Heart right ventricle (tissue), 16 donors: ENCODE measurements at regions of chr16 and their contacts with region 1.

Region 1: DNA sequence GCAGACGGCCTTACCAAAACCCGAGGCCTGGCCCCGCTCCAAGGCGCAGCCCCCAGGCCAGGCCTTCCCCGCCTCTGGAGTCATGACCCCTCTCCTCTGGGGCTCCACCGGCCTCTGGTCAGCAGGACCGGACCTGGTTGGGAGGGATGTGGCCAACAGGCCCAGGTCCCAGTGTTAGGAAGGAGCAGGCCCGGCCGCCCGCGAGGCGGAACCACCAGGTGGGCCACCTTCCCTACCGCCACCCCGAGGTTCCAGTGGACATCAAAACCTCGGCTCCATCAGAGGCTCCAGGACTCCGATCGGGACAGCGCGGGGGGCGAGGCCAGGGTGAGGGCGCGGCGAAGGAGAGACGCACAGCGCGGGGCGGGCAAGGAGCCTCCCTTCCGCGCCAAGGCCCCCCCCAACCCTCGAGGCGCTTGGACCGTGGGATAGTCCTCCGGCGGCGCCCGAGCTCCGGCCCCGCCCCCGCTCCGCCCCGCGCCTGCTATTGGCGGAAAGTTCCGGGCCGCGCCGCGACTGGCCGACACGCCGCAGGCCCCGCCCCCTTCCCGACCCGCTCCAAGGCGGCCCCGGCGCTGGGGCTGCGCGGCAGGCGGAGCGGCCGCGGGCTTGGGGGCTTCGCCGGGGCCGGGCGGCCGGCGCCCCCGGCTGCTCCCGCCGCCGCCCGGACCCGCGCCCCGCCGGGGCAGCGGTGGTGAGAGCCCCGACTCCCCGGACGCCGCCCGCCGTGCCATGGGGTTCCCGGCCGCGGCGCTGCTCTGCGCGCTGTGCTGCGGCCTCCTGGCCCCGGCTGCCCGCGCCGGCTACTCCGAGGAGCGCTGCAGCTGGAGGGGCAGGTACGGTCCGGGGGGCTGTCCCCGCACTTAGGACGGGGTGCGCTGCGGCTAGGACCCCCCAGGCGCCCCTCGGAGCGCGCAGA is at the start of gene METRN:
- DNase-seq: peak; percentile 92 to 95
- ATAC-seq: peak; percentile 78 to 94 (median 89)
- H3K4me3 ChIP-seq: peak within 1 kb of the TSS; percentile 64 to 94 (median 73)
- H3K27ac ChIP-seq: peak within 1 kb of the TSS in 8 of 10 donors; percentile 21 to 58 (median 50)
- H3K4me1 ChIP-seq: peaks cover 18 to 49% (median 34%) of the 10 kb centered on the region in 9 donors
- H3K27me3 ChIP-seq: peaks cover 0 to 46% (median 19%) of the 10 kb centered on the region in 7 donors
- CTCF ChIP-seq: no peak
- total RNA-seq, gene METRN: 51.4 to 77.2 (median 60.5) TPM

Region 2: DNA sequence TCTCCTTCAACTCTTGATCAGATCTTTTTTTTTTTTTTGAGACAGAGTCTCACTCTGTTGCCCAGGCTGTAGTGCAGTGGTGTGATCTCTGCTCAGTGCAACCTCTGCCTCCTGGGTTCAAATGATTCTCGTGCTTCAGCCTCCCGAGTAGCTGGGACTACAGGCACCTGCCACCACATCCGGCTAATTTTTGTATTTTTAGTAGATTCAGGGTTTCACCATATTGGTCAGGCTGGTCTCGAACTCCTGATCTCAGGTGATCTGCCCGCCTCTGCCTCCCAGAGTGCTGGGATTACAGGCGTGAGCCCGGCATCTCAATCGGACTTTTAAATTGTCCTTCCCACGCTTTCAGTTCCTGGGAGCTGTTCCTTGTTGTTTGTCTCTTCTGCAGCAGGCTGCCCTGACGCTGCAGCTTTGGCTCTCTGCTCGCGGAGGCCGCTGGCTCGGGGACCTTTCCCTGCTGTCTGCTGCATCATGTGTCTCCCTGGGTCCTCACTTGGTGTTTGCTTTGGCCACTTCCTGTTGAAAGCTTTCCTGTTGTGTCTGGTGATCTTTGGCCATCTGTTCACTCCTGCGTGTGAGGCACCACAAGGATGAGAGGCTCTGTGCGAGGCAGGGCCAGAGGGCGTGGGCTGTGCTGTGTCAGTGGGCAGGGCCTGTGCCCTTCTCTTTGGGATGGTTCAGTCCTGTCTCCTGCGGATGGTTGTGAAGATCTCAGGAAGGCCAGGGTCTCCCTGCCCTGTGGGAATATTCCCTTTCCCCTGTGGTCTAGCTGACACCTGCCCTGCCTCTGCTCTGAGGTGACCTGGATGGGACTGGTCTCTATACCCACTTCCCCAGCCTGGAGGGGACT is 205.7 kb before region 1 on chr16:
- intact Hi-C with region 1: no loop called
- DNase-seq: no peak
- ATAC-seq: peak in 3 of 8 donors; percentile 10 to 42 (median 28)
- H3K4me3 ChIP-seq: no peak overlapping the region
- H3K27ac ChIP-seq: no peak overlapping the region
- H3K4me1 ChIP-seq: no peaks in the 10 kb centered on the region
- H3K27me3 ChIP-seq: no peaks in the 10 kb centered on the region
- CTCF ChIP-seq: no peak

Region 3: GRCh38 chr16:626787-627186 is 88.0 kb before region 1 on chr16:
- intact Hi-C with region 1: no loop called
- DNase-seq: no peak
- ATAC-seq: no peak
- H3K4me3 ChIP-seq: no peak overlapping the region
- H3K27ac ChIP-seq: no peak overlapping the region
- H3K4me1 ChIP-seq: peaks cover 14 to 28% (median 21%) of the 10 kb centered on the region in 9 donors
- H3K27me3 ChIP-seq: no peaks in the 10 kb centered on the region
- CTCF ChIP-seq: no peak

Region 4: DNA sequence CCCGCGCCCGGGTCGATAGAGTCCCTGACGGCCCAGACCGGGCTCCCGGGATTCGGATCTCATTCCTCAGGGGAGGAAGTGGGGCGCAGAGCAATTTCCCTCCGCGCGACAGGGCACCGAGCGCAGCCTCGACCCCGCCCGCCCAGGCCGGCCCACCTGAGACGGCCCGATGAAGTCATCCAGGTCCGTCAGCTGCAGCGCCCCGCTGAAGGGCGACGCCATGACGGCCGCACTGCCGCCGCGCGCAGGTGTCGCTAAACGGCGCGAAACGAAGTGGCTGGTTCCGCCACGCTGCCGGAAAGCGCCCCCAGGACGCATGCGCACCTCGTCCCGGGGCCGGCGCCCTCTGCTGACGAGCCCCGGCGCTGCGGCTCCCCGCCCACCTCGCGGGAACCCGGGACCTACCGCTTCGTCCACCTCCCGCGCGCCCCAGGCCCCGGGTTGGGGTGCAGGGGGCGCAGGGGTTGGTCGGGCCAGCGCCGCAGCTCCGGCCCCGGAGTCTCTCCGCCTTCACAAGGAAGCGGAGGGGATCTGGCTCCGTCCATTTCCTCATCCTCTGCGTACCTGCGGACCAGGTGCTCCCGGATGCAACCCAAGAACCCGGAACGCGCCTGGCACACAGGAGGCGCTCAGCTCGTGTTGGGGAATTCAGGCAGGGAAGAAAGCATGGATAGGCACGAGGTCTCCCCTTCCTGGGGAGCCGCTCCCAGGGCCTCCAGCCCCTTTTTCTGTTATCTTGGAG is 26.1 kb after region 1 on chr16 and contains the start of gene CIAO3:
- intact Hi-C with region 1: loop called in 3 of 10 experiments (anchors 1 to 2 kb)
- DNase-seq: peak; percentile 87 to 91
- ATAC-seq: peak; percentile 91 to 96 (median 92)
- H3K4me3 ChIP-seq: peak within 1 kb of the TSS; percentile 68 to 100 (median 94)
- H3K27ac ChIP-seq: peak within 1 kb of the TSS in 9 of 10 donors; percentile 44 to 90 (median 82)
- H3K4me1 ChIP-seq: peaks cover 7 to 19% (median 15%) of the 10 kb centered on the region in 9 donors
- H3K27me3 ChIP-seq: peaks cover 0 to 18% (median 4%) of the 10 kb centered on the region in 7 donors
- CTCF ChIP-seq: peak; percentile 88 to 99 (median 97)
- total RNA-seq, gene CIAO3: 18.7 to 33.0 (median 24.1) TPM

Region 5: GRCh38 chr16:782766-783403 is 68.1 kb after region 1 on chr16:
- intact Hi-C with region 1: loop called (anchors 1 to 5 kb)
- DNase-seq: no peak
- ATAC-seq: no peak
- H3K4me3 ChIP-seq: no peak overlapping the region
- H3K27ac ChIP-seq: no peak overlapping the region
- H3K4me1 ChIP-seq: peaks cover 8 to 30% (median 15%) of the 10 kb centered on the region in 9 donors
- H3K27me3 ChIP-seq: peaks cover 4 to 47% (median 41%) of the 10 kb centered on the region in 7 donors
- CTCF ChIP-seq: no peak

Region 6: GRCh38 chr16:788394-789126 is 73.7 kb after region 1 on chr16 and contains the start of gene CHTF18:
- intact Hi-C with region 1: loop called (anchors 1 to 5 kb)
- DNase-seq: peak; percentile 90 to 94
- ATAC-seq: peak; percentile 80 to 97 (median 94)
- H3K4me3 ChIP-seq: peak within 1 kb of the TSS; percentile 81 to 99 (median 94)
- H3K27ac ChIP-seq: peak within 1 kb of the TSS in 9 of 10 donors; percentile 59 to 88 (median 78)
- H3K4me1 ChIP-seq: peaks cover 12 to 37% (median 24%) of the 10 kb centered on the region in 9 donors
- H3K27me3 ChIP-seq: peaks cover 0 to under 1% (median 0%) of the 10 kb centered on the region in 7 donors
- CTCF ChIP-seq: no peak
- total RNA-seq, gene CHTF18: 2.8 to 8.2 (median 5.2) TPM

Region 7: GRCh38 chr16:1054660-1055556 is 340.1 kb after region 1 on chr16:
- intact Hi-C with region 1: loop called in 9 of 10 experiments (anchors 5 to 10 kb)
- DNase-seq: peak; percentile 59 to 69
- ATAC-seq: peak; percentile 61 to 85 (median 75)
- H3K4me3 ChIP-seq: no peak overlapping the region
- H3K27ac ChIP-seq: no peak overlapping the region
- H3K4me1 ChIP-seq: peaks cover 0 to 7% (median 0%) of the 10 kb centered on the region in 9 donors
- H3K27me3 ChIP-seq: peaks cover 0 to 51% (median 20%) of the 10 kb centered on the region in 7 donors
- CTCF ChIP-seq: peak; percentile 66 to 92 (median 83)

Region 8: GRCh38 chr16:1097800-1098199 is 383.0 kb after region 1 on chr16:
- intact Hi-C with region 1: loop called in 1 of 10 experiments (anchors 5 kb)
- DNase-seq: peak; percentile 77 to 85
- ATAC-seq: peak; percentile 81 to 95 (median 92)
- H3K4me3 ChIP-seq: no peak overlapping the region
- H3K27ac ChIP-seq: peak overlapping the region; percentile 53 to 89 (median 86)
- H3K4me1 ChIP-seq: peaks cover 11 to 29% (median 22%) of the 10 kb centered on the region in 9 donors
- H3K27me3 ChIP-seq: peaks cover 0 to 40% (median 21%) of the 10 kb centered on the region in 7 donors
- CTCF ChIP-seq: no peak